T-cell (primary cell): ENCODE measurements at regions of chr13 and their contacts with region 1.

Region 1: DNA sequence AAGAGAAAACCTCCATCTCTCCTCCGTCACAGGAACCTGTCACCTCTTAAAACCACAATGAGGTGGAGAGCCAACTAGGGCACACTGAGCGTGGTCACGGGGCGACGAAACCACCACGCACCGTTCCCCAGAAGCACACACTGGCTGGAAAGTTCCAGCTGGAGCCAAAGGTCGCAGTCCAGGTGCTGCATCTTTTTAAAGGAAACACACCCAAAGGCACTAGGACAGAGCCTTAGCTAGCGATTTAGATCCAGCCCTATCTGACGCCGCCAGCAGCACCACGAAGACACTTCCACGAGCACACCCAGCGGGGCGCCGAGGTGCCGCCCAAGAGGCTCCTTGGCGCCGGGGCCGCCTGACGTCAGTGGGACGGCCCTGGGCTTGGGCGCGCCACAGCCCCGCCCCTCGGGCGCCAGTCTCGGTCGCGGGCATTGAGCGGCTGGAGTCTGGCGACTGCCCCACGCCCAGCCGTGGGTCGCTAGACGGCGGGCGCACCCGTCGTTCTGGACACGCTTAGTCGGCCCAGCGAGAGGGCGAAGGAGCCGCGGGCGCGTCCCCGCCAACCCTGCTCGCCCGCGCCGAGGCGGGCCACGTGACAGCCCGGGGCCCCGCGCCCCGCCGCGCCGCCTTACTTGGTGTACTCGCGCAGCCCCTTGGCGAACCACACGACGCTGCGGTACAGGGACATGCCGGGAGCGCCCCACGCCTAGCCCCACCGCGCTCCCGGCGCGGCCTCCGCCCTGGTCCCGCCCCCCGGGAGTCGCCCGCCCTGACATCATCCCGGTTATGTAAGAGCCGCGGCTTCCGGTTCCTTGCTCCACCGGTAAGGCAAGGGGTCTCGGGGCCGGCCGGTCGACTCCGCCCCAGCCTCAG is at the start of gene DHRS12:
- DNase-seq: peak; percentile 78 to 94 (median 84)
- ATAC-seq: peak; percentile 76 to 91 (median 86)
- H3K4me3 ChIP-seq: peak within 1 kb of the TSS; percentile 80 to 86
- H3K4me3 Mint-ChIP-seq: peak within 1 kb of the TSS; percentile 88 to 94 (median 91)
- H3K27ac ChIP-seq: peak within 1 kb of the TSS; percentile 100
- H3K27ac Mint-ChIP-seq: peak within 1 kb of the TSS; percentile 99
- H3K4me1 ChIP-seq: peaks cover 18 to 38% of the 10 kb centered on the region in 2 experiments
- H3K4me1 Mint-ChIP-seq: peaks cover 57 to 62% (median 59%) of the 10 kb centered on the region in 3 donors
- H3K27me3 ChIP-seq: no peaks in the 10 kb centered on the region
- H3K27me3 Mint-ChIP-seq: no peaks in the 10 kb centered on the region
- total RNA-seq, gene DHRS12: 18.1 to 27.8 (median 21.7) TPM

Region 2: DNA sequence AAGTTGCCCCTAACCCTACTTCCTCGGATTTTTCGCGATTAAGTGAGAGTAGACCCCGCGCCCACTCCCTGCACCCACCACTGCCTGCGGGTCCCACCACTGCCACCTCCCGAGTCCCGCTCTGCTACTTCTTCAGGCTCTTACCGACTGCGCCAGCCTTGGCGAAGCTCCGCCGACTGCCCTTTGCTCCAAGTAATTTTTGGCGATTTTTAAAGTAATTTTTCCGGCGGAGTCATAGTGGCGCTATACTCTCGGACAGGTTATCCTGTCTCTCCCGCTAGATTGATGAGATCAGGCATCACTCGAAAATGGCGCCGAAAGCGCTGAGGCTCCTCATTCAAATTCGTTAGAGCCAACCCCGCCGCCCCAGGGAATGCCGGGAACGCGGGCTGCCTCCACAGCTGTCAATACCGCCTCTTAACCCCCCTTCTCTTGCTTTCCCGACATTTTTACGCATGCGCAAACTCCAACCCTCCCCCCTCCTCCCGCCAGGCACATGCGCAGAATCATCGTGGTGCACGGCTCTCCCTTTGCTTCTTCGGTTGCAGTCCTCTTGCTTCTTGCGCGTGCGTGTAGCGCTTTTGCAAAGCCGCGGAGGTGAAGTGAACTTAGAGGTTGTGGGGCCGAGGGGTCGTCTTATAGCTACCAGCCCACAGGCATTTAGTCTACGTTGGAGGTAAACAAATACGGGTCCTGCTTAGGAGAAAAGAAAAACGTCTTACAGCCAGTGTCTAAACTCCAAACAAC is 1721.8 kb before region 1 on chr13:
- CTCF ChIA-PET with region 1: no interaction called
- POLR2A ChIA-PET with region 1: no interaction called
- DNase-seq: peak; percentile 93 to 99 (median 97)
- ATAC-seq: peak; percentile 76 to 79 (median 77)
- H3K4me3 ChIP-seq: peak overlapping the region; percentile 87 to 96
- H3K4me3 Mint-ChIP-seq: peak overlapping the region; percentile 94 to 99 (median 96)
- H3K27ac ChIP-seq: peak overlapping the region; percentile 85
- H3K27ac Mint-ChIP-seq: peak overlapping the region; percentile 95 to 96
- H3K4me1 ChIP-seq: peaks cover 31 to 37% of the 10 kb centered on the region in 2 experiments
- H3K4me1 Mint-ChIP-seq: peaks cover 38 to 66% (median 61%) of the 10 kb centered on the region in 3 donors
- H3K27me3 ChIP-seq: peaks cover 0 to 10% of the 10 kb centered on the region in 2 experiments
- H3K27me3 Mint-ChIP-seq: peaks cover 0 to 9% of the 10 kb centered on the region in 2 donors

Region 3: DNA sequence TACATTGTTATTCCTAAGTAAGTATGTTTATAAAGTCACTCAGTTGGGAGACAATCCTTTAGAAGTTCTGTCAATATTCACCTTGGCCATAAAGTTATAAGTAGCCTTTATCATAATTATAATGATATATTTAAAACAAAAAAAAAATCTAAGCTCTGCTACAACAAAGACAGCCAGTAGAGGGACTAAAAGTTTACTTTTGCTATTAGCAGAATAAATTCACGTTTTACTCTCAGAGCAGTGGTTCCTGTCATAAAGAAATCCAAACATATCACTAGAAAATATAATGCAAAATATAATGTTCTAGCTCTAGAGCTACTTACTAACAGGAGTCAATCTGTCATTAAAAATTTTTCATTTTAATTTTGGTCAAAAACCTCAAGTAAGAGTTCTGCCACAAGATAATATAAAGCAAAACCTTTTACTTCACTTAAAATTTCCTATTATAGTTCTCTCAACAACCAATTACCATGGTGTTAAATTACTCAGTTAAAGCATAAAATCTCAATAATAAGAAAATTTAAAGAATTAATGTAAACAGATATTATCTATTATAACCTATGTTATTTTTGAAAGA is 368.6 kb before region 1 on chr13:
- CTCF ChIA-PET with region 1: interaction called, 29 to 85 read pairs
- POLR2A ChIA-PET with region 1: interaction called in 1 of 2 experiments, 3 read pairs
- DNase-seq: peak in 1 of 35 experiments; percentile 58
- ATAC-seq: peak in 1 of 4 experiments; percentile 51
- H3K4me3 ChIP-seq: no peak overlapping the region
- H3K4me3 Mint-ChIP-seq: no peak overlapping the region
- H3K27ac ChIP-seq: no peak overlapping the region
- H3K27ac Mint-ChIP-seq: no peak overlapping the region
- H3K4me1 ChIP-seq: peaks cover 0 to 9% of the 10 kb centered on the region in 2 experiments
- H3K4me1 Mint-ChIP-seq: peaks cover 18 to 27% (median 26%) of the 10 kb centered on the region in 3 donors
- H3K27me3 ChIP-seq: no peaks in the 10 kb centered on the region
- H3K27me3 Mint-ChIP-seq: no peaks in the 10 kb centered on the region

Region 4: DNA sequence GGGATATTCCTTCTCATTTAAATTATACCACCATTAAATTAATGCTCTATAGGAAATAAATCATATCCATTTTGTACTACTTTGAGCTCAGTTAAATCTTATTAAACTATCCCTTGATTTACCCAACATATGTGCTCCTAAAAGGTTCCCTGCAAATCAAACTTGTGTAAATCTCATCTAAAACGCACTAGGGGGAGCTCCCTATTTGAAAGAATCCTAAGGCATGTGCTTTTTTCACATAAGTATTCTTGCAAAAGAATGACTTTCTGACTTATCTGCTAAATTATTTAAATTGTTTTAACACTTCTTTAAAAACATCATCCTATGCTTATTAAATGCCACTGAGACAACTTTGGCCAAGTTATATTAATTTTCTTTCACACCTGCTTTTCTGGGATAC is 358.7 kb before region 1 on chr13:
- CTCF ChIA-PET with region 1: interaction called, 3 to 31 read pairs
- POLR2A ChIA-PET with region 1: interaction called in 1 of 2 experiments, 12 read pairs
- DNase-seq: peak in 1 of 35 experiments; percentile 49
- ATAC-seq: no peak
- H3K4me3 ChIP-seq: no peak overlapping the region
- H3K4me3 Mint-ChIP-seq: no peak overlapping the region
- H3K27ac ChIP-seq: no peak overlapping the region
- H3K27ac Mint-ChIP-seq: no peak overlapping the region
- H3K4me1 ChIP-seq: peaks cover 0 to 8% of the 10 kb centered on the region in 2 experiments
- H3K4me1 Mint-ChIP-seq: peaks cover 16 to 20% (median 20%) of the 10 kb centered on the region in 3 donors
- H3K27me3 ChIP-seq: no peaks in the 10 kb centered on the region
- H3K27me3 Mint-ChIP-seq: no peaks in the 10 kb centered on the region

Region 5: GRCh38 chr13:51689663-51689996 is 114.0 kb before region 1 on chr13:
- CTCF ChIA-PET with region 1: no interaction called
- POLR2A ChIA-PET with region 1: no interaction called
- DNase-seq: no peak
- ATAC-seq: no peak
- H3K4me3 ChIP-seq: no peak overlapping the region
- H3K4me3 Mint-ChIP-seq: no peak overlapping the region
- H3K27ac ChIP-seq: no peak overlapping the region
- H3K27ac Mint-ChIP-seq: no peak overlapping the region
- H3K4me1 ChIP-seq: no peaks in the 10 kb centered on the region
- H3K4me1 Mint-ChIP-seq: peaks cover 8 to 12% (median 10%) of the 10 kb centered on the region in 3 donors
- H3K27me3 ChIP-seq: no peaks in the 10 kb centered on the region
- H3K27me3 Mint-ChIP-seq: no peaks in the 10 kb centered on the region